Right ventricle myocardium superior (tissue), 1 donor: ENCODE measurements at regions of chr6 and their contacts with region 1.

Region 1: GRCh38 chr6:15245361-15246216 is at the start of gene JARID2:
- DNase-seq: peak; percentile 99
- ATAC-seq: peak; percentile 87
- total RNA-seq, gene JARID2: 8.1 TPM

Region 2: GRCh38 chr6:14210663-14211561 is 1034.7 kb before region 1 on chr6:
- intact Hi-C with region 1: loop called (anchors 10 kb)
- DNase-seq: peak; percentile 96
- ATAC-seq: peak; percentile 98

Region 3: GRCh38 chr6:15001326-15001910 is 244.2 kb before region 1 on chr6:
- intact Hi-C with region 1: no loop called
- DNase-seq: no peak
- ATAC-seq: no peak

Region 4: DNA sequence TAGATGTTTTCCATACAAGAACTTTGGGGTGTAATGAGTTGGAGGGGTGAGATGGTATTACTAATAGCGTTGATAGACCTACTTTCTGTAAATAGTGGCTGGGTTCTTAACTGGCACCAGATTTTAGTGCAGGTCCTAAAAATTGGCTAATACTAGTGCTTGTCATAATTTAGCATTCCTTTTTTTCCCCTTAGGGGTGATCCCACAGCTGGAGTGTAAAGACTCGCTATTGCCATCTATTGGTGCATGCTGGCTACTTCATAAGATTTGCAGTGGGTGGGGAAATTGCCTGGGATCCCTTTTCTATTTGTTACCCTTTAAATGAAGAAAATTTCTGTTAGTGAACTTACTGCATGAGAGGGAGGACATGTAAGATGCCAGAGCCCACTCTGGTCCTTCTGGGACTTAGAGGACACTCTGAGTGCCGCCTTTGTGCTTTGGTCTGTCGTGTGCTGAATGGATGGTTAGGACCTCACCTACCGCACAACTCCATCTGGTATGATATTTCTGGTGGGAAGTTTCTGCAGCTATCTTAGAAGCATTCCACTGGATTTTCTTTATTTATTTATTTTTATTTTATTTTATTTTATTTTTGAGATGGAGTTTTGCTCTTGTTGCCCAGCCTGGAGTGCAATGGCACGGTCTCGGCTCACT is 195.8 kb after region 1 on chr6:
- intact Hi-C with region 1: loop called (anchors 5 kb)
- DNase-seq: no peak
- ATAC-seq: peak; percentile 87